ENCODE measurements at regions of chr11 and their contacts with region 1.

Region 1: GRCh38 chr11:75896843-75897419 is 81.9 kb downstream of the UVRAG start:
- DNase-seq: peak; percentile 63
- H3K4me3 ChIP-seq: no peak overlapping the region
- H3K27ac ChIP-seq: no peak overlapping the region
- H3K4me1 ChIP-seq: no peaks in the 10 kb centered on the region
- H3K27me3 ChIP-seq: no peaks in the 10 kb centered on the region
- CTCF ChIP-seq: peak; percentile 31 to 35
- POLR2A ChIP-seq: no peak

Region 2: GRCh38 chr11:75931124-75931523 is 34.2 kb after region 1 on chr11:
- CTCF ChIA-PET with region 1: no interaction called
- POLR2A ChIA-PET with region 1: no interaction called
- dilution Hi-C with region 1: no loop called
- intact Hi-C with region 1: no loop called
- DNase-seq: no peak
- H3K4me3 ChIP-seq: no peak overlapping the region
- H3K27ac ChIP-seq: no peak overlapping the region
- H3K4me1 ChIP-seq: peaks cover 3% of the 10 kb centered on the region
- H3K27me3 ChIP-seq: no peaks in the 10 kb centered on the region
- CTCF ChIP-seq: no peak
- POLR2A ChIP-seq: no peak

Region 3: DNA sequence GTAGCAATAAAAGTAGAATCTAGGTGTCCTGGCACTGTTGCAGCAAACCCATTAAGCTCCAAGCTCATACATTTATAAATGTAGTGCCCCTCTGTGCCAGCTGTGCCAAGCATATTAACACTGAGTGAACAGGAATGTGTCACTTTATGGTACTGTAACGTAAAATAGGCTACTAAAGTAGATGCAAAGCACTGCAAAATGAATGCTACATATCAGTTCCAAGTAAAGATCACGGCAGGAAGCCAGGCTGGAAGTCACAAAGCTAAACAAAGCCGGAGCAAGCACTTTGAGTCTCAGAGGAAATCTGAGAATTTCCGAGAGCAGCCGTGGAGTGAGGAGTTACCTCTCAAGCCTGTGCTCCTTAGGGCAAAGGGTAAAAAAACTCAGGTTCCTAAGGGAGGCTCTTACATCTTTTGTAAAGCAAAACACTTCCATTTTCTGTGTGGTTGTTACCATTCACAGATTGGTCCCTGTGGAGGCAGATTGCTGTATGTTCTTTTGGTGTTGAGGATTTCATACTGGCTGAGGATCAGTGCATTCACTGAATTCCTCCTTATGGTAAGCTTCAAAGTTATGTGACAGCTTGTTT is 223.7 kb after region 1 on chr11:
- CTCF ChIA-PET with region 1: interaction called, 14 read pairs
- POLR2A ChIA-PET with region 1: no interaction called
- dilution Hi-C with region 1: no loop called
- intact Hi-C with region 1: no loop called
- DNase-seq: peak; percentile 69
- H3K4me3 ChIP-seq: peak overlapping the region in 1 of 3 experiments; percentile 23
- H3K27ac ChIP-seq: peak overlapping the region; percentile 38
- H3K4me1 ChIP-seq: peaks cover 25% of the 10 kb centered on the region
- H3K27me3 ChIP-seq: no peaks in the 10 kb centered on the region
- CTCF ChIP-seq: no peak
- POLR2A ChIP-seq: no peak

Region 4: DNA sequence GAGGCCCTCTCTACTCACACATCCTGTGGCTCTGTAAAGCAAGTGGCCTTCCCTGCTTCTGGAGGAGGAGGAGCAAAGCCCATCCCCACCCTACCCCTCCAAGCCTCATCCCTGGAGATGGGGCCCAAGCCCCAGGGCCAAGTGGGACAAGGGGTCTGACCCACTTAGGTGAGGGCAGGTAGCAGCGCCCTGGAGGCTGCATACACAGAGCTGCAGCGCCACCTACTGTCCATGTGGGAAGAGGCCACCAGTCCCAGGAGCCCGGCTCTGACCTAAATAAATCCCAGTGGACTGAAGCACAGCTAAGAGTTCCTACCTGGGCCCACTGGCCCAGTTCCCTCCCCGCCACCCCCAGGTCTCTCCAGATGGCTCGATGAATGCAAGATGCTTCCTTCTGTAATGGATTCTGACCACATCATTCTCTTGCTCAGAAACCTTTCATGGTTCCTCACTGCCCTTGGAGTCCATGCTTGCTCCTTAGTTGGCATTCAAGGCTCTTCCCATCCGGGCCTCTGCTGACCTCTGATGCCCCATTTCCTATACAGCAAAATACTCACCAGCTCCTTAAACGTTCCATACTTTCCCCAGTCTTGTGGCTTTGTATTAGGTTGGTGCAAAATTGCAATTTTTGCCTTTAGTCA is 421.9 kb after region 1 on chr11:
- CTCF ChIA-PET with region 1: interaction called, 16 read pairs
- POLR2A ChIA-PET with region 1: no interaction called
- dilution Hi-C with region 1: no loop called
- intact Hi-C with region 1: loop called (anchors 2 kb)
- DNase-seq: peak; percentile 74
- H3K4me3 ChIP-seq: no peak overlapping the region
- H3K27ac ChIP-seq: no peak overlapping the region
- H3K4me1 ChIP-seq: no peaks in the 10 kb centered on the region
- H3K27me3 ChIP-seq: peaks cover 16 to 23% of the 10 kb centered on the region in 2 experiments
- CTCF ChIP-seq: peak; percentile 84 to 94
- POLR2A ChIP-seq: no peak

Measured in endothelial cell of umbilical vein (primary cell).